CD14-positive monocyte (primary cell): ENCODE measurements at regions of chr17 and their contacts with region 1.

Region 1: DNA sequence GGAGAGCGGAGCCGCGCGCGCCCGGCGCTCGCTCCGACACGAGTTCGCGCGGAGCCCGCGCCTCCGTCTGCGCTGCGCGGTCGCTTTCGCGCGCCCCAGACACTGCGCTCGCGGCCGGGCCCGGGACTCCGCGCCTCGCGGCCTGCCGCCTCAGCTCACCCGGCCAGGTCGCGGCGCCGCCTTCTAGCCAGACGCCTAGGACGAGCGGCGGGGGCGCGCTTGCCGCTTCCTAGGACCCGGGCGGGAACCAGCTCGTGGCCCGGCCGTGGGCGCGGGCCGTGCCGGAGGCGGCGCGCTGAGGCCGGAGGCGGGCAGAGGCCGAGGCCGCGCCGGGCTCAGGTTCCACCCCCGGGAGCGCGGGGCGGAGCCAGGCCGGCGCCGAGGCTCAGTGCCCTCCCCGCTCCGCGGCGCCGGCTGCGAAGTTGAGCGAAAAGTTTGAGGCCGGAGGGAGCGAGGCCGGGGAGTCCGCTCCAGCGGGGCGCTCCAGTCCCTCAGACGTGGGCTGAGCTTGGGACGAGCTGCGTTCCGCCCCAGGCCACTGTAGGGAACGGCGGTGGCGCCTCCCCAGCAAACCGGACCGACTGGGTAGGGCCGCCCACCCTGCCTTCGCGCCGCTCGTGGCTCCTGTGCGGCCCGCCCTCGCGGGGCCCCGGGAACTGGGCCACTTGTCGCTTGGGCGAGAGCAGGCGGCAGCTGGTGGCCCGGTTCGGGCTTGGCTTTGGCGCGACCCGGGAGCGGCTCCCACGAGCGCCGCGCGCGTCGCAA is at the start of gene SPHK1:
- DNase-seq: peak; percentile 50 to 65 (median 59)
- H3K4me3 ChIP-seq: peak within 1 kb of the TSS; percentile 75 to 86 (median 75)
- H3K4me3 Mint-ChIP-seq: peak within 1 kb of the TSS; percentile 96 to 97
- H3K27ac ChIP-seq: peak within 1 kb of the TSS; percentile 90 to 96
- H3K27ac Mint-ChIP-seq: peak within 1 kb of the TSS; percentile 87 to 97 (median 91)
- H3K4me1 ChIP-seq: peaks cover 42 to 57% of the 10 kb centered on the region in 2 donors
- H3K4me1 Mint-ChIP-seq: peaks cover 29% of the 10 kb centered on the region
- H3K27me3 ChIP-seq: peaks cover 0 to 11% of the 10 kb centered on the region in 2 donors
- H3K27me3 Mint-ChIP-seq: peaks cover 2 to 17% (median 8%) of the 10 kb centered on the region in 3 donors
- CTCF ChIP-seq: no peak
- polyA plus RNA-seq, gene SPHK1: 12.9 to 33.9 (median 19.1) TPM

Region 2: DNA sequence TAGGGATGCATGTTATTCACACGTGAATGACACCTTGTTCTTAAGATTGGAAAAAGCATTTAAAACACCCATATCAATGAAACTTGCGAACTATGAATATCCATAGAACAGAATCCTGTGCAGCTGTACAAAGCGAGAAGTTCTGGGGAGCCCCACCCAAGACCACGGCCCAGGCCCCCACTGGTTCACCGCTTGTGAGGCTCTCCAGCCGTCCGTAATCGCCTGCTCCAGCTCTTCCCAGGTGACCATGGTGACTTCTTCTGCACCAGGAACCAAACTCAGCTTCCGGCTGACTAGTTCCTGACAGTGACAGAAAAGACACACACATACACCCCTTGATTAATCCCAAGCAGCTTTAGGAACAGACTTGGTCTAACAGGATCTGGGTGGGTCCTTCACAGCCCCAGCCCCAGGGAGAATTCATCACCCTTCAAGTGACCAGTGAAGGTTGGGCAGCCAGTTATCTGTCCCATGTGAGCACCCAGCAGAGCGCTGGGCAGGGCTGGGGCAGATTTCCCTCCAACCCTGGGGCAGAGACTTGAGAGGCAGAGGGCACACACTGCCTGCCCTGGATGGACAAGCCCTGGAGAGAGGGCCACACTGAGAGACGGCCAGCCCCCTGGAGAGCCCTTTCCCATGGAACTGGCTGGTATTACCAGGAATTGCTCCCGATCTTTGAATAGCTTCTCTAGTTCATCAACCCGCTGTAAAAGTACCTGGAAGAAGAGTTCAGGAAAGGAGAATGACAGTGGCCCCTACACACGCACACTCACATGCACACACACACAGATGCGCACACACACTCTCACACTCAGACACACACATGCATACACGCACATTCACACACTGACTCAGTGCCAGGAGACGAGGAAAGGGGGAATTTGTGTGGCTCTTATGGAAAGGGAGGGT is 79.9 kb before region 1 on chr17:
- intact Hi-C with region 1: loop called in 1 of 2 experiments (anchors 5 kb)
- DNase-seq: no peak
- H3K4me3 ChIP-seq: no peak overlapping the region
- H3K4me3 Mint-ChIP-seq: no peak overlapping the region
- H3K27ac ChIP-seq: no peak overlapping the region
- H3K27ac Mint-ChIP-seq: no peak overlapping the region
- H3K4me1 ChIP-seq: no peaks in the 10 kb centered on the region
- H3K4me1 Mint-ChIP-seq: no peaks in the 10 kb centered on the region
- H3K27me3 ChIP-seq: no peaks in the 10 kb centered on the region
- H3K27me3 Mint-ChIP-seq: peaks cover 0 to 5% (median 0%) of the 10 kb centered on the region in 3 donors
- CTCF ChIP-seq: no peak

Region 3: GRCh38 chr17:76314392-76315227 is 69.8 kb before region 1 on chr17:
- intact Hi-C with region 1: no loop called
- DNase-seq: no peak
- H3K4me3 ChIP-seq: no peak overlapping the region
- H3K4me3 Mint-ChIP-seq: no peak overlapping the region
- H3K27ac ChIP-seq: no peak overlapping the region
- H3K27ac Mint-ChIP-seq: peak overlapping the region in 2 of 7 donors; percentile 44 to 56
- H3K4me1 ChIP-seq: no peaks in the 10 kb centered on the region
- H3K4me1 Mint-ChIP-seq: no peaks in the 10 kb centered on the region
- H3K27me3 ChIP-seq: no peaks in the 10 kb centered on the region
- H3K27me3 Mint-ChIP-seq: peaks cover 0 to 4% (median 0%) of the 10 kb centered on the region in 3 donors
- CTCF ChIP-seq: no peak

Region 4: GRCh38 chr17:76337413-76337777 is 47.0 kb before region 1 on chr17:
- intact Hi-C with region 1: no loop called
- DNase-seq: no peak
- H3K4me3 ChIP-seq: no peak overlapping the region
- H3K4me3 Mint-ChIP-seq: no peak overlapping the region
- H3K27ac ChIP-seq: no peak overlapping the region
- H3K27ac Mint-ChIP-seq: no peak overlapping the region
- H3K4me1 ChIP-seq: no peaks in the 10 kb centered on the region
- H3K4me1 Mint-ChIP-seq: peaks cover 3% of the 10 kb centered on the region
- H3K27me3 ChIP-seq: no peaks in the 10 kb centered on the region
- H3K27me3 Mint-ChIP-seq: peaks cover 0 to 3% (median 2%) of the 10 kb centered on the region in 3 donors
- CTCF ChIP-seq: no peak

Region 5: DNA sequence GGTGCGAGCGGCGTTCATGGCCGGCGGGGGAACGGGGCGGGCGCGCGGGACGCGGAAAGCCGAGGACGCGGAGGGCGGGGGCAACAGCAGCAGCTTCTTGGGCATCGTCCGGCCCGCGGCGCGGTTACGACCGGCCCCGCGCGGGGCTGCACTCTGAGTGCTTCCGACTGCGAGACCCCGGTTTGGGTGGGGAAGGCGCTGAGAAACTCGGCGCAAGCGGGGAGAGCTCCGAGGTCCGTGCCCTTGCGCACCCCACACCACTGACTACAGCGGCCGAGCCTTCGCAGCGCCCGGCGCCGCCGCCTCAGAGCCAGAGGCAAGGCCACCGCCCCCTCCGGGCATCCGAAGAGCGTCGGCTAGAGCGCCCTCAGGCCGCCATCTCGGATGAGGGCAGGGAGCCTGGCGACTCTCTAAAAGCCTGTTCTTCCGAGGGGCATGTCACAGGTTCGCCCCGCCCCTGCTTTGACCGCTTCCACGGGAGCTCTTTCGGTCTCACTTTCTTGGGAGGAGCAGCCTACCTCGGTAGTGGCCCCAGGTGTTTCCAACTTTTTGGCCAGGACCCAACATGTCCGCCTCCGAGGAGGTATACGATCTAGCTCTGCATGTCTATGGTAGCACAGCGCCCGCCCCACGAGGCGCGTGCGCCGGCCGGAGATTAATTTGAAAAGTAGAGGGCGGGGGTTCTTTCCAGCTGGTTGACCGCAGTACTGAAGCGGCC is 30.6 kb before region 1 on chr17 and contains the start of gene PRPSAP1:
- intact Hi-C with region 1: loop called (anchors 2 to 5 kb)
- DNase-seq: peak; percentile 75 to 84 (median 83)
- H3K4me3 ChIP-seq: peak within 1 kb of the TSS; percentile 53 to 91 (median 56)
- H3K4me3 Mint-ChIP-seq: peak within 1 kb of the TSS; percentile 91 to 99
- H3K27ac ChIP-seq: peak within 1 kb of the TSS; percentile 60 to 94
- H3K27ac Mint-ChIP-seq: peak within 1 kb of the TSS; percentile 90 to 100 (median 100)
- H3K4me1 ChIP-seq: peaks cover 15 to 21% of the 10 kb centered on the region in 2 donors
- H3K4me1 Mint-ChIP-seq: peaks cover 24% of the 10 kb centered on the region
- H3K27me3 ChIP-seq: no peaks in the 10 kb centered on the region
- H3K27me3 Mint-ChIP-seq: peaks cover 3 to 5% (median 3%) of the 10 kb centered on the region in 3 donors
- CTCF ChIP-seq: peak; percentile 36
- polyA plus RNA-seq, gene PRPSAP1: 45.8 to 58.2 (median 51.2) TPM

Region 6: GRCh38 chr17:76501018-76501826 is 116.8 kb after region 1 on chr17 and contains the start of gene RHBDF2:
- intact Hi-C with region 1: loop called in 1 of 2 experiments (anchors 10 kb)
- DNase-seq: peak; percentile 91 to 96 (median 94)
- H3K4me3 ChIP-seq: peak within 1 kb of the TSS; percentile 80 to 99 (median 97)
- H3K4me3 Mint-ChIP-seq: peak within 1 kb of the TSS; percentile 88 to 95
- H3K27ac ChIP-seq: peak within 1 kb of the TSS; percentile 91 to 97
- H3K27ac Mint-ChIP-seq: peak within 1 kb of the TSS; percentile 95 to 99 (median 98)
- H3K4me1 ChIP-seq: peaks cover 72 to 81% of the 10 kb centered on the region in 2 donors
- H3K4me1 Mint-ChIP-seq: peaks cover 75% of the 10 kb centered on the region
- H3K27me3 ChIP-seq: no peaks in the 10 kb centered on the region
- H3K27me3 Mint-ChIP-seq: peaks cover 0 to 3% (median 0%) of the 10 kb centered on the region in 3 donors
- CTCF ChIP-seq: no peak
- polyA plus RNA-seq, gene RHBDF2: 36.9 to 124 (median 68.6) TPM

Region 7: DNA sequence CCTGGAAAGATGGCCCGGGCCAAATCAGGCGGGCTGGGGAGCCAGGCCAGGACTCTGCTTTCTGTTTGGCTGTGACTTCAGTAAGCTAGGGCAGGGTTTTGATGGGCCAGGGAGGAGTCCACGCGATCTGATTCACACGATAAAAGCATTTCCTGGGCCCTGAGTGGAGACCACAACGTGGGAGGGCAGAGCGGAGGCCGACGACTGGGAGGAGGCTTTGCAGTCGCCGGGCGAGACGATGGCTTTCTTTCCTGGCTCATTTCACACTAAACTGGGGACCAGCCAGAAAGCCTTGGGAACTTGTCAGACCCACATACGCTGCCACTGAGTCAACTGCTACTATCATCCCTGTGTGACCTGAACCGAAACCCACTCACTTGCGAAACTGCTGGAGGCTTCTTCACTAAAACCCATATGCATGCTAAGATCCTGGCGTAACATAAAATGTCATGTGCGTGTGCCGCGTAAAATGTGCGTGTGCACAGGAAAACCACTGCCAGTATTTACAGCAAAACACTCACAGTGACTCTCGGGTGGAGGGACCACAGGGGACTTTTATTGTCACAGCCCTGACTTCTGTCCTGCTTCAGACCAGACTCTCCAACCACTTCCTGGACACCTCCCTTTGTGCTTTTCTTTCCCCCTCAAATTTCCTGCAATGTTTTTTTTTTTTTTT is 131.0 kb after region 1 on chr17:
- intact Hi-C with region 1: no loop called
- DNase-seq: peak; percentile 90 to 99 (median 97)
- H3K4me3 ChIP-seq: peak overlapping the region in 2 of 3 experiments; percentile 6 to 45
- H3K4me3 Mint-ChIP-seq: peak overlapping the region; percentile 67 to 88
- H3K27ac ChIP-seq: peak overlapping the region; percentile 78 to 82
- H3K27ac Mint-ChIP-seq: peak overlapping the region; percentile 92 to 99 (median 94)
- H3K4me1 ChIP-seq: peaks cover 37 to 41% of the 10 kb centered on the region in 2 donors
- H3K4me1 Mint-ChIP-seq: peaks cover 47% of the 10 kb centered on the region
- H3K27me3 ChIP-seq: no peaks in the 10 kb centered on the region
- H3K27me3 Mint-ChIP-seq: peaks cover 6 to 10% (median 9%) of the 10 kb centered on the region in 3 donors
- CTCF ChIP-seq: no peak